ENCODE measurements at regions of chr11 and their contacts with region 1.

Region 1: GRCh38 chr11:75301601-75302345 is 49.7 kb downstream of the ARRB1 start:
- DNase-seq: no peak
- H3K4me3 ChIP-seq: no peak overlapping the region
- H3K27ac ChIP-seq: no peak overlapping the region
- H3K4me1 ChIP-seq: no peaks in the 10 kb centered on the region
- H3K27me3 ChIP-seq: no peaks in the 10 kb centered on the region
- CTCF ChIP-seq: no peak

Region 2: GRCh38 chr11:75337195-75337654 is 35.5 kb after region 1 on chr11:
- CTCF ChIA-PET with region 1: no interaction called
- dilution Hi-C with region 1: loop called (anchors 5 kb)
- in situ Hi-C with region 1: no loop called
- intact Hi-C with region 1: no loop called
- DNase-seq: peak; percentile 48
- H3K4me3 ChIP-seq: no peak overlapping the region
- H3K27ac ChIP-seq: no peak overlapping the region
- H3K4me1 ChIP-seq: peaks cover 27% of the 10 kb centered on the region
- H3K27me3 ChIP-seq: no peaks in the 10 kb centered on the region
- CTCF ChIP-seq: no peak

Measured in mammary epithelial cell (primary cell).